Naive thymus-derived CD4-positive, alpha-beta T cell (primary cell): ENCODE measurements at regions of chr13 and their contacts with region 1.

Region 1: GRCh38 chr13:26707122-26708006 is 53.2 kb downstream of the GPR12 start:
- DNase-seq: peak in 7 of 9 donors; percentile 21 to 58 (median 46)
- ATAC-seq: peak; percentile 61
- H3K4me3 ChIP-seq: no peak overlapping the region
- H3K4me3 Mint-ChIP-seq: no peak overlapping the region
- H3K27ac ChIP-seq: no peak overlapping the region
- H3K27ac Mint-ChIP-seq: no peak overlapping the region
- H3K4me1 ChIP-seq: no peaks in the 10 kb centered on the region
- H3K4me1 Mint-ChIP-seq: peaks cover 0 to 4% (median 0%) of the 10 kb centered on the region in 7 donors
- H3K27me3 ChIP-seq: no peaks in the 10 kb centered on the region
- H3K27me3 Mint-ChIP-seq: peaks cover 0 to 19% (median 7%) of the 10 kb centered on the region in 5 donors

Region 2: DNA sequence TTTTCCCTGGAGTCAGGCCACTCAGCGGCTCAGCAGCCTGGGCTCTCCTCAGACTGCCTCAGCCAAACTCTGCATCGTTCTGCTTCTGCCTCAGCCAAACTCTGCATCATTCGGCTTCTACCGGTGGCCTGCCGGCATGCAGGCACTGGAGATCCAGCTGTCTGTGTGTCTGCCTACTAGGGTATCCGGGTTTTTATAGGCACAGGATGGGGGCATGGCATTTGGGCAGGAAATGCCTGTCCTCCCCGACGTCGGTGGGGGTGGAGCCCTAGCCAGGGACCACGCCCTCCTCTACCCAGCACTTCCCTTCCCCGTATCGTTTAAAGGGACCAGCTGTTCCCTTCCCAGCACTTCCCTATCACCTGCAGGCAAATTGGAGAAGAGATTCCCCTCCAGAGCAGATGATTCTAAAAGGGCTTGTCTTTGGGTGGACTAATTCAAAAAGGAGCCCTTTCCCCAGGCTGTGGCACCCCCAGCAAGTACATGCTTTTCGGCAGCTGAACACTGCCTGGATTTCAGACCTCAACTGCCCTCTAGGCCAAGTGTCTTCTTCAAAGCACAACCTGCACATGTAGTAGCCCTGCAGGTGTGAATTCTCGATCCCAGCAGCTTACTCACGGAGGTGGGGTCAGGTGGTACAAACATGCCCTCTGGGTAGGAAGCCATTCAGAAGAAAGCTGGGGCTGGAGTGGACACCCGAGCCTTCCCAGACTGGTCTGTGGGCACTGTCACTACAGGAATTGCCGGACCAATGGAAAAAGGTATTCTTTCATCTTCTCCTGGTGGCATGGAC is 78.7 kb after region 1 on chr13:
- CTCF ChIA-PET with region 1: interaction called, 4 read pairs
- POLR2A ChIA-PET with region 1: no interaction called
- intact Hi-C with region 1: loop called in 1 of 2 experiments (anchors 2 kb)
- DNase-seq: peak; percentile 22 to 76 (median 62)
- ATAC-seq: peak; percentile 80
- H3K4me3 ChIP-seq: peak overlapping the region; percentile 63
- H3K4me3 Mint-ChIP-seq: peak overlapping the region; percentile 74 to 94 (median 87)
- H3K27ac ChIP-seq: peak overlapping the region; percentile 22
- H3K27ac Mint-ChIP-seq: peak overlapping the region in 7 of 9 donors; percentile 6 to 91 (median 77)
- H3K4me1 ChIP-seq: peaks cover 9 to 16% of the 10 kb centered on the region in 2 donors
- H3K4me1 Mint-ChIP-seq: peaks cover 4 to 34% (median 23%) of the 10 kb centered on the region in 7 donors
- H3K27me3 ChIP-seq: no peaks in the 10 kb centered on the region
- H3K27me3 Mint-ChIP-seq: peaks cover 6 to 18% (median 8%) of the 10 kb centered on the region in 5 donors

Region 3: GRCh38 chr13:26929971-26930730 is 222.8 kb after region 1 on chr13:
- CTCF ChIA-PET with region 1: interaction called, 10 read pairs
- POLR2A ChIA-PET with region 1: no interaction called
- intact Hi-C with region 1: no loop called
- DNase-seq: peak; percentile 29 to 71 (median 57)
- ATAC-seq: peak; percentile 75
- H3K4me3 ChIP-seq: no peak overlapping the region
- H3K4me3 Mint-ChIP-seq: no peak overlapping the region
- H3K27ac ChIP-seq: no peak overlapping the region
- H3K27ac Mint-ChIP-seq: no peak overlapping the region
- H3K4me1 ChIP-seq: no peaks in the 10 kb centered on the region
- H3K4me1 Mint-ChIP-seq: peaks cover 0 to 4% (median 0%) of the 10 kb centered on the region in 7 donors
- H3K27me3 ChIP-seq: no peaks in the 10 kb centered on the region
- H3K27me3 Mint-ChIP-seq: peaks cover 0 to 15% (median 5%) of the 10 kb centered on the region in 5 donors